ENCODE measurements at regions of chr17 and their contacts with region 1.

Region 1: GRCh38 chr17:44141717-44142285 is at the start of gene HROB:
- DNase-seq: peak; percentile 99
- ATAC-seq: peak; percentile 83
- H3K4me3 Mint-ChIP-seq: peak within 1 kb of the TSS; percentile 91
- H3K27ac Mint-ChIP-seq: peak within 1 kb of the TSS; percentile 85
- H3K4me1 Mint-ChIP-seq: peaks cover 24% of the 10 kb centered on the region
- H3K27me3 Mint-ChIP-seq: peaks cover 2% of the 10 kb centered on the region
- total RNA-seq, gene HROB: 17.1 to 23.3 TPM

Region 2: DNA sequence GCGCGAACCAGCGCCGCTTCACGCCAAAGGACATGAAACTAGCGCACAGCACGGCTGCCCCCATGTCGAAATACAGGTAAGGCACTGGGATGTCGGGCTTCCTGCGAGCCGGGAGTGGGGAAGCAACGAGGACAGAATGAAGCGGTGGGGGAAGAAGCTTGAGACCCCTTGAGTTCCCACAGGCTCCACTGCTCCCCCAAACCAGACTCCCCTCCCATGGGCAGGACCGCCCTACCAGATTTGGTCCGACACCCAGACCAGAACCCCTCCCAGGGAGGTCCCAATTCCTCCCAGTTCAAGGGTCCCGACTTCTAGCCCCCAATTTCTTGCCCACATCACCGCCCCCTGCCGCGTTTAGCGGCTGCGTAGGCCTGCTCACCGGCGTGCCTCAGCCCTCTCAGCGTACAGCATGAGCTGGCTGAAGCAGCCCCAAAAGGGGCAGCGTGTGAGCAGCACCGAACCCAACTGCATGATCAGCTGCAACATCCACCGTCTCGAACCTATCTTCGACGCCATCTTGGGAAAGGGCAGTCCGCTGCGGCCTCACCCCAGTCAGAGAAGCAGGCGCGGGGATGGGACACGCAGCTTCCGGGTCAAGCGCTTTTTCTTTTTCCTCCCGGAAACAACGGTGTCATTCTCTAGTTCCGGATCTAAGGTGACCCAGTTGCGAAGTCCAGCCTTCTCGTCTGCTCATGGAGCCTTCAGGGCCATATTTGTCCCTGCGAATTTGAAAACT is 127.2 kb before region 1 on chr17 and contains the start of gene TMEM101:
- CTCF ChIA-PET with region 1: no interaction called
- POLR2A ChIA-PET with region 1: no interaction called
- intact Hi-C with region 1: loop called in 1 of 2 experiments (anchors 1 kb)
- DNase-seq: peak; percentile 94
- ATAC-seq: peak; percentile 99
- H3K4me3 Mint-ChIP-seq: peak within 1 kb of the TSS; percentile 96
- H3K27ac Mint-ChIP-seq: peak within 1 kb of the TSS; percentile 96
- H3K4me1 Mint-ChIP-seq: peaks cover 7% of the 10 kb centered on the region
- H3K27me3 Mint-ChIP-seq: no peaks in the 10 kb centered on the region
- total RNA-seq, gene TMEM101: 17.6 to 22.7 TPM

Region 3: DNA sequence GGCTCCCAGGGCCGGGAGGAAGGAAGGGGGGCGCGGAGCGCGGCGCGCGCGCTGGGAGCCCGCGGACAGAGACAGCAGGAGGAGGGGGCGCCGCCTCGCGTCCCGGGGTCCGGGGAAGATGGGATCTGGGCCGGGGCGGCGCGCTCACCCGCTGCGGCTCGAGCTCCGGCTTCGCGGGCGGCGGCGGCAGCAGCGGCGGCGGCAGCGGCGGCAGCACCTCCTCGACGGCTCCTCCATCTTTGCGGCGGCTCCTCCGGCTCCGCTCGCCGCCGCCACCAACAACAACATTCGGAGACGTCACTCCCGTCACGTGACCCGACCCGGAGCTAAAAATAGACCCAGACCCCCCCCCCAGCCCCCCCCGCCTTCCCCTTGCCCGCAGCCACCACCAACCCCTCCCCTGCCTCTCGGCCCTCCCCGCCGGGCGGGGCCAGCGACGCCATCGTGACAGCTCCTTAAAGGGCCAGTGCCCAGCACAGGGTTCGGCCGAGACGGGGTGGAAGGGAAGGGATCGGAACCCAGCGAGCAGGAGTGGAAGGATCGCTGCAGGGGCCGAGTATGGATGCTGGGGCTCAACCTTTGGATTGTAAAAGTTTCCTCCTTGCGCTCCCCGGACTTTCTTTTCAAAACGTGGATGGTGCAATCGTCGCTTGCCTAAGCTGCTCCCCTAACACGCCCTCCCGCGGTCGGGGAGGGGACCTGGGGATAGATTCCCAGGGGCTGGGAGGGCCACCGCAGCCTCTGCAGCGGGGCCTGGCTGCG is 18.3 kb before region 1 on chr17 and contains the start of gene HDAC5:
- CTCF ChIA-PET with region 1: interaction called, 5 read pairs
- POLR2A ChIA-PET with region 1: interaction called, 13 read pairs
- intact Hi-C with region 1: loop called (anchors 1 kb)
- DNase-seq: peak; percentile 98
- ATAC-seq: peak; percentile 97
- H3K4me3 Mint-ChIP-seq: peak within 1 kb of the TSS; percentile 87
- H3K27ac Mint-ChIP-seq: peak within 1 kb of the TSS; percentile 97
- H3K4me1 Mint-ChIP-seq: peaks cover 22% of the 10 kb centered on the region
- H3K27me3 Mint-ChIP-seq: no peaks in the 10 kb centered on the region
- total RNA-seq, gene HDAC5: 16.5 to 22.0 TPM

Region 4: GRCh38 chr17:44199553-44200477 is 58.0 kb after region 1 on chr17 and contains the start of gene ATXN7L3:
- CTCF ChIA-PET with region 1: interaction called, 3 read pairs
- POLR2A ChIA-PET with region 1: no interaction called
- intact Hi-C with region 1: loop called in 1 of 2 experiments (anchors 1 kb)
- DNase-seq: peak; percentile 100
- ATAC-seq: peak; percentile 84
- H3K4me3 Mint-ChIP-seq: peak within 1 kb of the TSS; percentile 88
- H3K27ac Mint-ChIP-seq: peak within 1 kb of the TSS; percentile 94
- H3K4me1 Mint-ChIP-seq: peaks cover 38% of the 10 kb centered on the region
- H3K27me3 Mint-ChIP-seq: no peaks in the 10 kb centered on the region
- total RNA-seq, gene ATXN7L3: 66.3 to 70.6 TPM

Region 5: DNA sequence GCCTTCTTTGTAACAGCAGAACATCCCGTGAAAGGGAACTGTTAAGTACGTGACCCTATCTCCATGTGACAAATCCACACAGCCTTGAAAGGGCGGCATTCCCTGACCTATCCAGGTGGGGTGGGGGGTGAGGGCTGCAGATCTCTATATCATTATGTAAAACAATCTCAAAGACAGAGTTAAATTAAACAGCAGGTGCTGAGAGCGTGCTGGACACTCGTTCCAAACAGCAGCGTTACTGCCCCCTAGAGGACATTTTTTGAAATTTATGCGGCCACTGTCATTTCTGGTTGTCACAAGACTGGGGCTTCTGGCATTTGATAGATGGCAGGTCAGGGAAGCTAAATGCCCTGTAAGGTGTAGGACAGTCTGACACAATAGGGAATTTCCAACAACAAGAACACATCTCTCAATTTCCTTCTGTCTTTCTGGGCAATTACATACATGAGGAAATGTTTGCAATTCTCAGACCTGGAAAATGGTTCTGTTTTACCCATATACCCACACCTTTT is 189.5 kb after region 1 on chr17:
- CTCF ChIA-PET with region 1: interaction called, 4 read pairs
- POLR2A ChIA-PET with region 1: no interaction called
- intact Hi-C with region 1: loop called in 1 of 2 experiments (anchors 1 kb)
- DNase-seq: peak; percentile 82
- ATAC-seq: peak; percentile 64
- H3K4me3 Mint-ChIP-seq: no peak overlapping the region
- H3K27ac Mint-ChIP-seq: no peak overlapping the region
- H3K4me1 Mint-ChIP-seq: peaks cover 12% of the 10 kb centered on the region
- H3K27me3 Mint-ChIP-seq: no peaks in the 10 kb centered on the region

Region 6: GRCh38 chr17:44804302-44805089 is 662.7 kb after region 1 on chr17:
- CTCF ChIA-PET with region 1: no interaction called
- POLR2A ChIA-PET with region 1: no interaction called
- intact Hi-C with region 1: no loop called
- DNase-seq: no peak
- ATAC-seq: no peak
- H3K4me3 Mint-ChIP-seq: no peak overlapping the region
- H3K27ac Mint-ChIP-seq: no peak overlapping the region
- H3K4me1 Mint-ChIP-seq: no peaks in the 10 kb centered on the region
- H3K27me3 Mint-ChIP-seq: no peaks in the 10 kb centered on the region